T-cell (primary cell): ENCODE measurements at regions of chr1 and their contacts with region 1.

Region 1: GRCh38 chr1:155017041-155017945 is 14.7 kb downstream of the ZBTB7B start:
- DNase-seq: peak; percentile 72 to 95 (median 84)
- ATAC-seq: peak; percentile 84 to 93 (median 89)
- H3K4me3 ChIP-seq: peak overlapping the region; percentile 33 to 38
- H3K4me3 Mint-ChIP-seq: peak overlapping the region; percentile 55 to 89 (median 55)
- H3K27ac ChIP-seq: peak overlapping the region; percentile 67
- H3K27ac Mint-ChIP-seq: peak overlapping the region; percentile 95 to 96
- H3K4me1 ChIP-seq: peaks cover 42 to 59% of the 10 kb centered on the region in 2 experiments
- H3K4me1 Mint-ChIP-seq: peaks cover 63 to 72% (median 69%) of the 10 kb centered on the region in 3 donors
- H3K27me3 ChIP-seq: no peaks in the 10 kb centered on the region
- H3K27me3 Mint-ChIP-seq: no peaks in the 10 kb centered on the region

Region 2: DNA sequence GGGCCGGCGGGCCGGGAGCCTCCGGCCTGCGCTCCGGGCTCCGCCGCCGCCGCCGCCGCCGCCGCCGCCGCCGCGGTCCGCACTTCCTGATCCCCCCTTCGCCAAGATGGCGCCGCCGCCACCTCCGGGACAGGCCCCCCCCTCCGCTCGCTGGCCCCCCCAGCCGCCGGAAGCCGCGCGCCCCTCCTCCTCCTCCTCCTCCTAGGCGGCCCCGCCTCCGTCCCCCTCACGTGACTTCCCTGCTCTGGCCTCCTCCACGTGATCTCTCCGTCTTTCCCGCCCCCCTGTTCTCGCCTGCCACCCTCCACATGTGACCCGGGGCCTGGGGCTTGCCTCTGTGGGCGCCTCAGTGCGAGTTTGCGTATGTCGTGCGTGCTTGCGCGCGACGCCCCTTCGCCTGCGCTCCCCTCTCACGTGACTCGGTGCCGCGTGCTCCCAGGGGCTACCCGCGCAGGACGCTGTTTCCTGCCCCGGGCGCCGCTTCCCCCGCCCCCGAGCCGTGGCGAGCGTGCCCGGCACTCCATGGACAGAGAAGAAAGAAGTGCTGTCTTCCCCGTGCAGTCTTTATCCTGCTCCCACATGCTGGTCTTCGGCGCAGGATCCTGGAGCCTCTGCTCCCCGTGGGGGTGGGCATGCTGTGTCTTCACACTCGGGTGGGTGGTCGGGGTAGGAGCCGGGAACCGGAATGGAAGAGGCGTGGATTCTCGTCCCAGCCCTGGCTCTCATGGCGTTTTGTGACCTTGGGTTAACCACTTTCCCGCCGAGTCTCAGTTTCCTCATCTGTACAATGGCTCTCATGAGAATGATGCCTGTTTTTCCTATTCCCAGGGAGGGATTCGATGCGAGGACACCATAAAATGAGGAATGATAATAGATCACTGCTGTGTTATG is 458.5 kb before region 1 on chr1 and contains the start of gene UBE2Q1:
- CTCF ChIA-PET with region 1: interaction called in 1 of 2 experiments, 11 read pairs
- POLR2A ChIA-PET with region 1: no interaction called
- DNase-seq: peak; percentile 98 to 100 (median 99)
- ATAC-seq: peak; percentile 91 to 93 (median 92)
- H3K4me3 ChIP-seq: peak within 1 kb of the TSS; percentile 77 to 89
- H3K4me3 Mint-ChIP-seq: peak within 1 kb of the TSS; percentile 89 to 92 (median 90)
- H3K27ac ChIP-seq: peak within 1 kb of the TSS; percentile 85
- H3K27ac Mint-ChIP-seq: peak within 1 kb of the TSS; percentile 91 to 92
- H3K4me1 ChIP-seq: peaks cover 19 to 33% of the 10 kb centered on the region in 2 experiments
- H3K4me1 Mint-ChIP-seq: peaks cover 34 to 41% (median 36%) of the 10 kb centered on the region in 3 donors
- H3K27me3 ChIP-seq: no peaks in the 10 kb centered on the region
- H3K27me3 Mint-ChIP-seq: no peaks in the 10 kb centered on the region
- total RNA-seq, gene UBE2Q1: 64.0 to 111 (median 90.0) TPM

Region 3: GRCh38 chr1:154974063-154974807 is 43.1 kb before region 1 on chr1 and contains the start of gene CKS1B:
- CTCF ChIA-PET with region 1: interaction called, 9 to 13 read pairs
- POLR2A ChIA-PET with region 1: interaction called in 1 of 2 experiments, 3 read pairs
- DNase-seq: peak; percentile 92 to 99 (median 96)
- ATAC-seq: peak; percentile 85 to 90 (median 88)
- H3K4me3 ChIP-seq: peak within 1 kb of the TSS; percentile 73 to 89
- H3K4me3 Mint-ChIP-seq: no peak within 1 kb of the TSS
- H3K27ac ChIP-seq: peak within 1 kb of the TSS; percentile 90
- H3K27ac Mint-ChIP-seq: no peak within 1 kb of the TSS
- H3K4me1 ChIP-seq: peaks cover 8 to 51% of the 10 kb centered on the region in 2 experiments
- H3K4me1 Mint-ChIP-seq: peaks cover 17 to 35% (median 18%) of the 10 kb centered on the region in 3 donors
- H3K27me3 ChIP-seq: no peaks in the 10 kb centered on the region
- H3K27me3 Mint-ChIP-seq: no peaks in the 10 kb centered on the region
- total RNA-seq, gene CKS1B: 7.9 to 11.8 (median 10.3) TPM

Region 4: DNA sequence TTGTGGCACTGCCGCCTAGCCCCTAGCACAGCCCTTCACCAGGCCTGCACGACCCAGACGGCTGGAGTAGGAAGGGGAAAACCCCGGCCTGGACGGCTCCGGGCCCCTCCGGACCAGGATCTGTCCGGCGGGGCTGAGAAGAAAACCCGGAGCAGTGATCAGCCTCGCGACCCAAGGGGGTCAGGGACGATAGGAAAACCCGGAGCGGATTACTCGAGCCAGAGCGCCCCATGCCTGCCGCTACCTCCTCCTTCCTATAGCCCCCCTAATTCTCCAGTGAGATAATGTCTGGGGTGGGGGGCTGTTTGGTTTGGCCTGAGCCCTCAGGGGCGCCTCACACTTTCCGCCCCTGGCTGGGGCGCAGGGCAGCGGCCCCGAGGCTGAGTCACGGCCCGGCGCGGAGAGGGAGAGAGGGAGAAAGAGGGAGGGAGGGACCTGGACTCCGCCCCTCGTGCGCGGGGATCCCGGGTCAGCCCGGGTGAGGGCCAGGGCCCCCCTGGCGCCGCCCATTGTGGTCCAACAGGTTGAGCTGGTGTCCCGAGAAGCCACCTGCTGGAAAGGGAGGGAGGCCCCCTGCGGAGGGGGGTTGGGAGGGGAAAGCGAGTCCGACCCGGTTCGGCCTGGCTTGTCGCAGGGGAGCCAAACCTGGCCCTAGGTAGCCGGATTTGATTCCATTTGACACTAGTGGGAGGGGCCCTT is 16.4 kb before region 1 on chr1:
- CTCF ChIA-PET with region 1: interaction called, 4 to 15 read pairs
- POLR2A ChIA-PET with region 1: interaction called in 1 of 2 experiments, 13 read pairs
- DNase-seq: peak in 32 of 35 experiments; percentile 32 to 80 (median 50)
- ATAC-seq: peak; percentile 31 to 44 (median 39)
- H3K4me3 ChIP-seq: peak overlapping the region; percentile 72 to 97
- H3K4me3 Mint-ChIP-seq: peak overlapping the region; percentile 84 to 89 (median 88)
- H3K27ac ChIP-seq: peak overlapping the region; percentile 95
- H3K27ac Mint-ChIP-seq: peak overlapping the region; percentile 84 to 85
- H3K4me1 ChIP-seq: peaks cover 21 to 80% of the 10 kb centered on the region in 2 experiments
- H3K4me1 Mint-ChIP-seq: peaks cover 44 to 52% (median 50%) of the 10 kb centered on the region in 3 donors
- H3K27me3 ChIP-seq: no peaks in the 10 kb centered on the region
- H3K27me3 Mint-ChIP-seq: no peaks in the 10 kb centered on the region

Region 5: GRCh38 chr1:155105604-155106022 is 88.3 kb after region 1 on chr1:
- CTCF ChIA-PET with region 1: no interaction called
- POLR2A ChIA-PET with region 1: no interaction called
- DNase-seq: no peak
- ATAC-seq: no peak
- H3K4me3 ChIP-seq: no peak overlapping the region
- H3K4me3 Mint-ChIP-seq: no peak overlapping the region
- H3K27ac ChIP-seq: no peak overlapping the region
- H3K27ac Mint-ChIP-seq: no peak overlapping the region
- H3K4me1 ChIP-seq: no peaks in the 10 kb centered on the region
- H3K4me1 Mint-ChIP-seq: peaks cover 0 to 7% (median 0%) of the 10 kb centered on the region in 3 donors
- H3K27me3 ChIP-seq: peaks cover 0 to 6% of the 10 kb centered on the region in 2 experiments
- H3K27me3 Mint-ChIP-seq: peaks cover 0 to 4% of the 10 kb centered on the region in 2 donors

Region 6: GRCh38 chr1:155329971-155330598 is 312.8 kb after region 1 on chr1:
- CTCF ChIA-PET with region 1: interaction called in 1 of 2 experiments, 12 read pairs
- POLR2A ChIA-PET with region 1: no interaction called
- DNase-seq: no peak
- ATAC-seq: no peak
- H3K4me3 ChIP-seq: no peak overlapping the region
- H3K4me3 Mint-ChIP-seq: no peak overlapping the region
- H3K27ac ChIP-seq: no peak overlapping the region
- H3K27ac Mint-ChIP-seq: peak overlapping the region in 1 of 2 donors; percentile 44
- H3K4me1 ChIP-seq: peaks cover 0 to 6% of the 10 kb centered on the region in 2 experiments
- H3K4me1 Mint-ChIP-seq: peaks cover 5 to 9% (median 8%) of the 10 kb centered on the region in 3 donors
- H3K27me3 ChIP-seq: no peaks in the 10 kb centered on the region
- H3K27me3 Mint-ChIP-seq: no peaks in the 10 kb centered on the region

Region 7: GRCh38 chr1:156054500-156055280 is 1037.4 kb after region 1 on chr1 and contains the start of gene LAMTOR2:
- CTCF ChIA-PET with region 1: no interaction called
- POLR2A ChIA-PET with region 1: no interaction called
- DNase-seq: peak; percentile 87 to 97 (median 95)
- ATAC-seq: peak; percentile 78 to 85 (median 82)
- H3K4me3 ChIP-seq: peak within 1 kb of the TSS; percentile 80 to 82
- H3K4me3 Mint-ChIP-seq: peak within 1 kb of the TSS; percentile 93 to 100 (median 95)
- H3K27ac ChIP-seq: peak within 1 kb of the TSS; percentile 78
- H3K27ac Mint-ChIP-seq: peak within 1 kb of the TSS; percentile 90 to 95
- H3K4me1 ChIP-seq: peaks cover 6 to 22% of the 10 kb centered on the region in 2 experiments
- H3K4me1 Mint-ChIP-seq: peaks cover 28 to 43% (median 34%) of the 10 kb centered on the region in 3 donors
- H3K27me3 ChIP-seq: no peaks in the 10 kb centered on the region
- H3K27me3 Mint-ChIP-seq: no peaks in the 10 kb centered on the region
- total RNA-seq, gene LAMTOR2: 21.5 to 37.8 (median 35.2) TPM